H1 (cell line): ENCODE measurements at regions of chr20 and their contacts with region 1.

Region 1: DNA sequence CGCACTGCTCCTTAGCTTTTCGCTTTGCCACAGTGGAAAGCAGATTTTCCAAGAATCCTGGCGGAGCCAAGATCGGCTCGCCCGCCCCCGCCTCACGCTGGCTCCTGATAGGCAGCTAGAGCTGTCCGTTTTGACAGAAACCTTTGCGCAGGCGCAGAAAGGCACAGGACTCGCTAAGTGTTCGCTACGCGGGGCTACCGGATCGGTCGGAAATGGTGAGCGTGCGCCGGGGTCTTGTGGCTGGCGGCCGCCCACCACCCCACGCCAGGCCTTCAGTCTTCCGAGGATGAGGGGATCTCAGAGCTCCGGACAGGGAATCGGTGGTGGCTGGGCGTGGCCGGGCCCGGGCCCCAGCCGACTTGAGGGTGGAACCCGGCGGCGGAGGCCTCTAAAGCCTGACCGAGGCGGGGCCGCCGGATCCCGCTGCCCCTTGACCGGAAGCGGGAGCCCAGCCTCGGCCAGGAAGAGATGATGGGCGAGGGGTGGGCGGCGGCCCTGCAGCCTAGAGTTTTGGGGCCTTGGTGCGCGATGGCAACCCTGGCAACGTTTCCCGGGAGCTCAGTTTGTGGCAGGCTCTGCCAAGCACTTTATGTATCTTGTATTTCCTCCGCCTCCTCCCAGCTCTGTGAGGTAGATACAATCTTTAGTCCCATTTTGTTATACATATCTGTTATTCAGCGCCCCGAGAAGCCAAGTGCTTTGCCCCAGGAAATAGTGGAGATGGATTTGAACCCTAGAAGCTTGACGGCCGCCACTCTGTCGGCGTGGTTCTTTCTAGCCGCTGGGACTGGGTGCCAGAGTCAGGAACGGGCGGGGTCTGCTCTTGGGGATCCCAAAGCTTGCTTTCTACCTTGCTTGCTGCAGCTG is at the start of gene DYNLRB1:
- DNase-seq: peak; percentile 79 to 99
- H3K4me3 ChIP-seq: peak within 1 kb of the TSS; percentile 77 to 87 (median 82)
- H3K27ac ChIP-seq: peak within 1 kb of the TSS; percentile 74
- H3K4me1 ChIP-seq: peaks cover 0 to 3% (median 3%) of the 10 kb centered on the region in 4 experiments; a peak in 3 of 7 replicates
- H3K27me3 ChIP-seq: no peaks in the 10 kb centered on the region
- CTCF ChIP-seq: no peak
- EP300 ChIP-seq: no peak
- POLR2A ChIP-seq: peak; percentile 76 to 77
- RAD21 ChIP-seq: no peak
- total RNA-seq, gene DYNLRB1: 107 and 109 TPM in 2 replicates

Region 2: GRCh38 chr20:34302723-34303528 is 213.6 kb before region 1 on chr20 and contains the start of gene AHCY:
- CTCF ChIA-PET with region 1: interaction called, 5 read pairs
- POLR2A ChIA-PET with region 1: interaction called, 12 read pairs
- DNase-seq: peak; percentile 94 to 97
- H3K4me3 ChIP-seq: peak within 1 kb of the TSS; percentile 69 to 94 (median 86)
- H3K27ac ChIP-seq: peak within 1 kb of the TSS; percentile 92
- H3K4me1 ChIP-seq: peaks cover 3 to 9% (median 7%) of the 10 kb centered on the region in 4 experiments; a peak in 6 of 7 replicates
- H3K27me3 ChIP-seq: no peaks in the 10 kb centered on the region
- CTCF ChIP-seq: no peak
- EP300 ChIP-seq: no peak
- POLR2A ChIP-seq: peak; percentile 84 to 98
- RAD21 ChIP-seq: no peak
- total RNA-seq, gene AHCY: 404 and 414 TPM in 2 replicates

Region 3: DNA sequence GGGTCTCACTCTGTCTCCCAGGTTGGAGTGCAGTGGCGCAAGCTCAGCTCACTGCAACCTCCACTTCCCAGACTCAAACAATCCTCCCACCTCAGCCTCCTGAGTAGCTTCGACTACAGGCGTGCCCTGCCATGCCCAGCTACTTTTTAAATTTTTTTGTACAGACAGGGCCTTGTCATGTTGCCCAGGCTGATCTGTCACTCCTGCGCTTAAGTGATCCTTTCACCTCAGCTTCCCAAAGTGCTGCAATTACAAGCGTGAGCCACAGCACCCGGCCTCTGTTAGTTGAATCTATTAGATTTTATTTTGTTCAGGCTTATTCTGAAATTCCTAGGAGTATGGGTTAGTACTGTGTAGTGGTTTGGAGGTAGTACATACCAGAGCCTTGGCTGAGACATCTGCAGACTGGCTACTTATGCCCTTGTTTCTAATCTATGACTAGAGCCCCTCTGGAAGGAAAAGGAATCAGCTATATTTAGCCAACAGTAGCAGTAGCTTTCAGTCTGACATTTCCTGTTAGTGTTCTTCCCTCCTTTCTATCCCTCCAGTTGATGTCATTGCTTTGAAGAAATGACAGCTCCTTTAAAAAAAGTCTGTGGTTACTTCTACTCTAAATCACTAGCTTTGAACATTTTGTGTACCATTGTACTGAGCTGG is 79.0 kb before region 1 on chr20:
- CTCF ChIA-PET with region 1: no interaction called
- POLR2A ChIA-PET with region 1: no interaction called
- DNase-seq: no peak
- H3K4me3 ChIP-seq: no peak overlapping the region
- H3K27ac ChIP-seq: no peak overlapping the region
- H3K4me1 ChIP-seq: no peaks in the 10 kb centered on the region
- H3K27me3 ChIP-seq: no peaks in the 10 kb centered on the region
- CTCF ChIP-seq: no peak
- EP300 ChIP-seq: no peak
- POLR2A ChIP-seq: no peak
- RAD21 ChIP-seq: no peak

Region 4: GRCh38 chr20:34506480-34506879 is 10.0 kb before region 1 on chr20:
- CTCF ChIA-PET with region 1: interaction called, 4 read pairs
- POLR2A ChIA-PET with region 1: interaction called, 15 read pairs
- DNase-seq: no peak
- H3K4me3 ChIP-seq: no peak overlapping the region
- H3K27ac ChIP-seq: no peak overlapping the region
- H3K4me1 ChIP-seq: no peaks in the 10 kb centered on the region
- H3K27me3 ChIP-seq: no peaks in the 10 kb centered on the region
- CTCF ChIP-seq: no peak
- EP300 ChIP-seq: no peak
- POLR2A ChIP-seq: no peak
- RAD21 ChIP-seq: no peak

Region 5: GRCh38 chr20:34538671-34539123 is 22.2 kb after region 1 on chr20:
- CTCF ChIA-PET with region 1: interaction called, 16 read pairs
- POLR2A ChIA-PET with region 1: no interaction called
- DNase-seq: peak in 1 of 2 experiments; percentile 82
- H3K4me3 ChIP-seq: no peak overlapping the region
- H3K27ac ChIP-seq: no peak overlapping the region
- H3K4me1 ChIP-seq: peaks cover 0 to 2% (median 0%) of the 10 kb centered on the region in 4 experiments; a peak in 3 of 7 replicates
- H3K27me3 ChIP-seq: no peaks in the 10 kb centered on the region
- CTCF ChIP-seq: peak; percentile 71 to 87 (median 83)
- EP300 ChIP-seq: no peak
- POLR2A ChIP-seq: no peak
- RAD21 ChIP-seq: peak; percentile 58 to 68

Region 6: DNA sequence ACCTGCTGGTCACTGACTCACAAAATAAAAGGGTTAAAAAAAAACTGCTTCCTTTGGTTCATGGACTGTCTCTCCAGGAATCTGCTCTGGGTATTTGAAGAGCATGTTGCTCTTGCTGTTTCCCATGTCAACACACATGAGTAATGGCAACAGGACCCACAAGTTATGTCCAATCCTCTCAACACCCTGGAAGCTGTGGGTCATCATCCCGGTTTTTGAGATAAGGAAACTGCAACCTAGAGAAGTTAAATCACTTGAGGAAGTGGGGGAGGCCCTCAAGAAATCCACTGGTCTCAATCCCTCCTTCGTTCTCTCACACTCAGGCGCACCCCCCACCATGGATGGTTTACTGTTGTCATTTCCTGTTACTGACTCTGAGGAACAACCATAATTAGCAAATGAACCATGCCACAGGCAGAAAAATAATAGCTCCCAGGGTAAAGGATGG is 54.4 kb after region 1 on chr20:
- CTCF ChIA-PET with region 1: no interaction called
- POLR2A ChIA-PET with region 1: no interaction called
- DNase-seq: no peak
- H3K4me3 ChIP-seq: no peak overlapping the region
- H3K27ac ChIP-seq: no peak overlapping the region
- H3K4me1 ChIP-seq: 0 out of 7 replicates have a peak, but pooled peaks cover 0 to 4% (median 1%) of the 10 kb centered on the region in 4 experiments
- H3K27me3 ChIP-seq: no peaks in the 10 kb centered on the region; a peak in 1 of 7 replicates
- CTCF ChIP-seq: no peak
- EP300 ChIP-seq: no peak
- POLR2A ChIP-seq: no peak
- RAD21 ChIP-seq: no peak